ENCODE measurements at regions of chr13 and their contacts with region 1.

Region 1: GRCh38 chr13:46553886-46554858 is 1.2 kb downstream of the LRCH1 start:
- DNase-seq: no peak
- ATAC-seq: peak; percentile 78
- H3K4me3 ChIP-seq: peak overlapping the region; percentile 70
- H3K27ac ChIP-seq: peak overlapping the region; percentile 86
- H3K4me1 ChIP-seq: peaks cover 11% of the 10 kb centered on the region
- H3K27me3 ChIP-seq: no peaks in the 10 kb centered on the region
- CTCF ChIP-seq: peak in 2 of 3 experiments; percentile 20 to 52; a peak in 3 of 6 replicates
- EP300 ChIP-seq: peak in 1 of 2 experiments; percentile 30; a peak in 1 of 4 replicates
- POLR2A ChIP-seq: peak; percentile 90
- RAD21 ChIP-seq: no peak

Region 2: DNA sequence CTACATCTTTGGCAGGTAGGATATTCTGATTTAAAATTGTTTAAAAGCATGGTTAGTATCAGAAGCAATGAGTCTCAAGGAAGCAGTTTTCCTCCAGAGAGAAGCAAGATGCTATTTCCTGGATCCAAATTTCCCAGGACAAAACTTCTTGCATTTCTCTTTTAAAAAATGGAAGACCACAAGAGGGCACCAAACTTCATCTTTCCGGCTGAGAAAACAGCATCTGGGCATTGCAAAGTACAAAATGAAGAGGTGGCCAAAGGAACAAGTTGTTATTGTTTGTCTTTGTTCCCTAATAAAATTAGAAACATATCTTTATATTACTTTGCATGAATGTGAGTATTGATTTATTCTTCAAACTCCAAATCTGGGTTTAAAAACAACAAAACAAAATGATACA is 61.2 kb before region 1 on chr13:
- CTCF ChIA-PET with region 1: interaction called, 22 read pairs
- POLR2A ChIA-PET with region 1: no interaction called
- RAD21 ChIA-PET with region 1: interaction called, 21 read pairs
- SMC1A ChIA-PET with region 1: interaction called, 13 read pairs
- in situ Hi-C with region 1: no loop called
- intact Hi-C with region 1: no loop called
- DNase-seq: no peak
- ATAC-seq: peak; percentile 64
- H3K4me3 ChIP-seq: no peak overlapping the region
- H3K27ac ChIP-seq: no peak overlapping the region
- H3K4me1 ChIP-seq: peaks cover 3% of the 10 kb centered on the region; the same call in 1 of the 2 replicates
- H3K27me3 ChIP-seq: no peaks in the 10 kb centered on the region
- CTCF ChIP-seq: peak; percentile 45 to 73 (median 53); a peak in 5 of 6 replicates
- EP300 ChIP-seq: no peak
- POLR2A ChIP-seq: no peak
- RAD21 ChIP-seq: peak; percentile 93

Region 3: DNA sequence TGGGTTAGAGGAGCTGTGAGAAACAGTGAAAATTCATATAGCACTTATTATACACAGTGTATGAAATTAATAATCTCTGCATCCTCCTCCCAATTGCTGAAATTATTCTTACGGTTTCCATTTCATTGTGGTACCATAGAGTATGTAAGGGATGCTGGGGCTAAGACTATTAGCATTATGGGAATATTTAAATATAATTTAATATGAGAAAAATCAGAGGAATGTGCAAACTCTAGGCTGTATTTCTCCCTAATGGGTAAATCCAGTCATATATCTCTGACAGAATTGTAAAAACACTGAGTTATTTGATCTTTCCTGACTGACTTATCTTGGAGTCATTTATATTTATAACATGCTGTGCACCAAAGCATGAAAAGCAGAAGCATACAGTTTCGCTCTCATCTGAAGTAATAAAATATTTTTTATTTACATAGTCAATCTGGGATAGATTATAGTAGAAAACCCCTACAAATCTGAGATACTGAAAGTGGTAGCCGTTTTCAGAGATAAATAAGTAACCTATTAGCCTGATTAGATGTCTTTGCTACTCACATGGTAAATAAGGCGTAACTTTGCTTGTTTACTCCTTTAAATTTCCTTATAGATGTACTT is 33.7 kb after region 1 on chr13:
- CTCF ChIA-PET with region 1: interaction called, 18 read pairs
- POLR2A ChIA-PET with region 1: interaction called, 6 read pairs
- RAD21 ChIA-PET with region 1: interaction called, 41 read pairs
- SMC1A ChIA-PET with region 1: interaction called, 20 read pairs
- in situ Hi-C with region 1: no loop called
- intact Hi-C with region 1: no loop called
- DNase-seq: no peak
- ATAC-seq: peak; percentile 79
- H3K4me3 ChIP-seq: 0 out of 2 replicates have a peak overlapping the region, but pooled peaks have one; percentile 7
- H3K27ac ChIP-seq: peak overlapping the region; percentile 29
- H3K4me1 ChIP-seq: peaks cover 58% of the 10 kb centered on the region
- H3K27me3 ChIP-seq: no peaks in the 10 kb centered on the region
- CTCF ChIP-seq: no peak
- EP300 ChIP-seq: peak in 1 of 2 experiments; percentile 56; a peak in 2 of 4 replicates
- POLR2A ChIP-seq: no peak
- RAD21 ChIP-seq: no peak

Region 4: DNA sequence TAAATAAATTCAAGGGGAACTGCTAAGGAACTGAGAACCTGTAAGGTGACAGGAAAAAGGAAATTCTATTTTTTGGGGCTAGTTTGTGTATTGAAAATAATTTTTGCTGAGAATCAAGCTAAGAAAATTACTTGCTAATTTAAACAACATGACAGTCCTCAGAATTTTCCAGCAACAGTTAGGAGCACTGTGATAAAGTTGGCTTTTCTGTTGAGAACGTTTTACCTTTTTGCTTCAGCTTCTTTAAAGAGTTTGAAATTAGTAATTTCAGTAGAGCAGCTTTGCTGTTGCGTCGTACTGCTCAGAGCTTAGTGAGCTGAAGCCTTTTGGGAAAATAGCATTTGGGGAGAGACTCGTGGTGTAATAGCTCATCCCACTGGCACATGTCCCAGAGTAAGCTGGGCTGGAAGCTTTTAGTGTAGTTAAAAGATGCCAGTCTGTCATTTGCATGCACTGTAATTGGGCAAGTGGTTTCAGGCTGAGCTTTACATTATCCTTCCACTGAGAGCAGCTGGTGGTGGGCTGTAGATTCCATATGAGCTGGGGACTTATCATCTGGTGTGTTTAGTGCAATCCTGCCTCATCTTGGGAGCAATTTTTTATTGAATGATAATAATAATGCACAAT is 68.6 kb after region 1 on chr13:
- CTCF ChIA-PET with region 1: interaction called, 9 read pairs
- POLR2A ChIA-PET with region 1: interaction called, 5 read pairs
- RAD21 ChIA-PET with region 1: interaction called, 22 read pairs
- SMC1A ChIA-PET with region 1: interaction called, 8 read pairs
- in situ Hi-C with region 1: no loop called
- intact Hi-C with region 1: no loop called
- DNase-seq: no peak
- ATAC-seq: peak; percentile 30
- H3K4me3 ChIP-seq: peak overlapping the region; percentile 1; the same call in 1 of the 2 replicates
- H3K27ac ChIP-seq: peak overlapping the region; percentile 55
- H3K4me1 ChIP-seq: peaks cover 61% of the 10 kb centered on the region
- H3K27me3 ChIP-seq: no peaks in the 10 kb centered on the region
- CTCF ChIP-seq: no peak
- EP300 ChIP-seq: no peak
- POLR2A ChIP-seq: no peak
- RAD21 ChIP-seq: no peak

Region 5: DNA sequence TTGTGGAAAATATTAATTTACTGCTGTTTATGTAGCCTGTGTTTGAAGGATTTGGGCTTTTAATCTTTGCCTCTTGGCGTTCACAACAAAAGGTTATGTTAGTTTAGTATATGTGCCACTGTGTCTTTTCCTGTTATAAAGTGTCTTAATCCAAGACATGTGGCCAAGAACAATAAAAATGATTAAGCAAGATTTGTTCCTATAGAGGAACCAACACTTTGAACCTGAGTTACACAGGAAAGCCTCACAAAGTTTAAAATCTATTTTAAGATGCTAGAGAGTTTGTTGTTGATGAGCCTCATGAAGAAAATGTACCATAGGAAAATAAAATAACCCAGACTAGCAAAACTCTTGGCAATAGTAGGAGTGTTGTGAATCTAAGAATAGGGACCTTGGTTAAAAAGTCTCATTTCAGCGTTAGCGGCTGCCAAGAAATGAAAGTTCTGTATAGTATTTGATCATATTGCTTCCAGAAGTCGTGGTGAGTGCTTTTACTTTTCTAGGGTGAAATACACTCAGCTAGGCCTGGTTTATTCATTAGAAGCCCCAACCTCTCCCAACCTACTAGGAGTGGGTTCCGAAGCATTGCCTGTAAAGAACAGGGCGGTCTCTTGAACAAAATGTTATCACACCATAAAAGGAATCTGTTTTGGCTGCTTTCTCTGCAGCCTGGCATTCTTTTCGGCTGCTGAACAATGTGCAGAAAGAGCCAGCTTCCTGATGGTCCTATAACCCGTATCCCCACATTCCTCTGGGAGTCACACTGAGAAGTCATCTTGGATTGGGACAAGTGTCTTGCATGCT is 101.4 kb after region 1 on chr13:
- CTCF ChIA-PET with region 1: interaction called, 10 read pairs
- POLR2A ChIA-PET with region 1: interaction called, 4 read pairs
- RAD21 ChIA-PET with region 1: interaction called, 13 read pairs
- SMC1A ChIA-PET with region 1: interaction called, 18 read pairs
- in situ Hi-C with region 1: no loop called
- intact Hi-C with region 1: no loop called
- DNase-seq: no peak
- ATAC-seq: peak; percentile 17
- H3K4me3 ChIP-seq: peak overlapping the region; percentile 9; the same call in 1 of the 2 replicates
- H3K27ac ChIP-seq: peak overlapping the region; percentile 67
- H3K4me1 ChIP-seq: peaks cover 29% of the 10 kb centered on the region
- H3K27me3 ChIP-seq: no peaks in the 10 kb centered on the region
- CTCF ChIP-seq: no peak
- EP300 ChIP-seq: no peak
- POLR2A ChIP-seq: no peak
- RAD21 ChIP-seq: no peak

Region 6: DNA sequence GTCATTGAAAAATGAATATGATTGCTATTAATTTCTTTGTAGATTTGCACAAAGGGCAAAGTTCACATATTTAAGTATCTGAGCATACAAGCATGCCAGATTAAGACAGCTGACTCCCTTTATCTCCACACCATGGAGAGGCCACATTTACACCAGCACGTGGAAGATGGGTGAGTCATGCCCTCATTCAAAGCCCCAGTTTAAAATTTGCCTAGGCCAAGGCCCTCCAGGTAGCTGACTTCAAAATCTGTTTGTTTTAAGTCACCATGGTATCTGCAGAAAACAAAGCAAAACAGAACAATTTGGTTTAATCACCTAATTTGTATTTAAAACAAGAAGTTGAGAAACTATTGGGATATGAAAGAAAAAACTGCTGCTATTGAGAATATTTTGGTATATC is 133.6 kb after region 1 on chr13:
- CTCF ChIA-PET with region 1: interaction called, 52 read pairs
- POLR2A ChIA-PET with region 1: interaction called, 3 read pairs
- RAD21 ChIA-PET with region 1: interaction called, 10 read pairs
- SMC1A ChIA-PET with region 1: interaction called, 36 read pairs
- in situ Hi-C with region 1: no loop called
- intact Hi-C with region 1: loop called (anchors 2 kb)
- DNase-seq: no peak
- ATAC-seq: peak; percentile 69
- H3K4me3 ChIP-seq: no peak overlapping the region
- H3K27ac ChIP-seq: no peak overlapping the region
- H3K4me1 ChIP-seq: peaks cover 7% of the 10 kb centered on the region; the same call in 1 of the 2 replicates
- H3K27me3 ChIP-seq: no peaks in the 10 kb centered on the region
- CTCF ChIP-seq: no peak
- EP300 ChIP-seq: no peak
- POLR2A ChIP-seq: no peak
- RAD21 ChIP-seq: no peak

Measured in GM12878 (cell line).